CD14-positive monocyte (primary cell): ENCODE measurements at regions of chr19 and their contacts with region 1.

Region 1: DNA sequence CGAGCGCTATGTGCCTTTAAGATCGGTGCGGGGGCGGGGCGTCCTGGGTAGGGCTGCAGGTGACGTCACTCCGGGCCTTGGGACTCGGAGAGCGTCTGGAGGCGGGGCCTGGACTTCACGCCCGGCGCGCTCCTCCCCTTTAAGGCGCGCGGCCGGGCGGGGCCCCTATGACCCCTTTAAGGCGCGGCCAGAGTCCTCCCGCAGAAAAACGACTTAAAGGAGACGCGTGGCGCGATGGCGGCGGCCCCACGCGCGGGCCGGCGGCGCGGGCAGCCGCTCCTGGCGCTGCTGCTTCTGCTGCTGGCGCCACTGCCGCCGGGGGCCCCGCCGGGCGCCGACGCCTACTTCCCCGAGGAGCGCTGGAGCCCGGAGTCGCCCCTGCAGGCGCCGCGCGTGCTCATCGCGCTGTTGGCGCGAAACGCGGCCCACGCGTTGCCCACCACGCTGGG is at the start of gene COLGALT1:
- DNase-seq: peak; percentile 97 to 98 (median 98)
- H3K4me3 ChIP-seq: peak within 1 kb of the TSS; percentile 74 to 95 (median 93)
- H3K4me3 Mint-ChIP-seq: peak within 1 kb of the TSS; percentile 83 to 91
- H3K27ac ChIP-seq: peak within 1 kb of the TSS; percentile 83
- H3K27ac Mint-ChIP-seq: peak within 1 kb of the TSS; percentile 89 to 99 (median 94)
- H3K4me1 ChIP-seq: peaks cover 56 to 59% of the 10 kb centered on the region in 2 donors
- H3K4me1 Mint-ChIP-seq: peaks cover 43% of the 10 kb centered on the region
- H3K27me3 ChIP-seq: no peaks in the 10 kb centered on the region
- H3K27me3 Mint-ChIP-seq: peaks cover 0 to 5% (median 1%) of the 10 kb centered on the region in 3 donors
- CTCF ChIP-seq: no peak
- polyA plus RNA-seq, gene COLGALT1: 66.8 to 176 (median 68.8) TPM

Region 2: GRCh38 chr19:17511724-17512573 is 43.6 kb before region 1 on chr19:
- intact Hi-C with region 1: loop called (anchors 5 kb)
- DNase-seq: peak; percentile 59 to 79 (median 77)
- H3K4me3 ChIP-seq: peak overlapping the region; percentile 64 to 97 (median 66)
- H3K4me3 Mint-ChIP-seq: peak overlapping the region; percentile 95 to 99
- H3K27ac ChIP-seq: peak overlapping the region; percentile 75 to 91
- H3K27ac Mint-ChIP-seq: peak overlapping the region; percentile 81 to 96 (median 92)
- H3K4me1 ChIP-seq: peaks cover 29 to 52% of the 10 kb centered on the region in 2 donors
- H3K4me1 Mint-ChIP-seq: peaks cover 50% of the 10 kb centered on the region
- H3K27me3 ChIP-seq: no peaks in the 10 kb centered on the region
- H3K27me3 Mint-ChIP-seq: peaks cover 0 to 1% (median 0%) of the 10 kb centered on the region in 3 donors
- CTCF ChIP-seq: no peak

Region 3: DNA sequence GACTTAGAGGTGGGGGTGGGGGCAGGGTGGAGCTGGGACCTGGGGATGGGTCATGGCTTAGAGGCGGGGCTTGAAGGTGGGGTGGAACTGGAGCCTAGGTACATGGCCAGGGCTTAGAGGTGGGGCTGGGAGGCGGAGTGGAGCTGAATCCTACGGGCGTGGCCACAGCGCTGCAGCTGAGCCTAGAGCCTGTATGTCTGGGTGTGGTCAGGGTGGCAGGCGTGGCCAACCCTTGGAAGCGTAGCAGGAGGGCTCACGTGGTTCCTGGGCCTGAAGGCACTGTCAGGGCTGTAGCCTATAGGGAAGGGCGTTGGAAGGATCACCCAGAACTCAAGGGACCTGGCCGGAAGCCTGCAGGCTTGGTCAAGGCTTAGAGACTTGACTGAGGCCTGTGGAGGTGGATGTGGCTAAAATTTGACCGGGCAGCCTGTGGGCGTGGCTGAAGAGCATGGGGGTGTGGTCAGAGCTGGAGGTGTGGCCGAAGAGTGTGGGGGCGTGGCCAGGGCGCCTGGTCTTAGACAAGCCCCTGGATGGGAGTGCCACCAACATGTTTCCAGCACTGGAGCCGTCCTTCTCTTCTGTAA is 24.2 kb after region 1 on chr19:
- intact Hi-C with region 1: loop called in 1 of 2 experiments (anchors 2 kb)
- DNase-seq: peak; percentile 57 to 61 (median 61)
- H3K4me3 ChIP-seq: peak overlapping the region in 1 of 3 experiments; percentile 44
- H3K4me3 Mint-ChIP-seq: peak overlapping the region; percentile 63 to 66
- H3K27ac ChIP-seq: peak overlapping the region in 1 of 2 donors; percentile 20
- H3K27ac Mint-ChIP-seq: peak overlapping the region; percentile 68 to 88 (median 77)
- H3K4me1 ChIP-seq: peaks cover 6 to 19% of the 10 kb centered on the region in 2 donors
- H3K4me1 Mint-ChIP-seq: peaks cover 11% of the 10 kb centered on the region
- H3K27me3 ChIP-seq: no peaks in the 10 kb centered on the region
- H3K27me3 Mint-ChIP-seq: no peaks in the 10 kb centered on the region
- CTCF ChIP-seq: no peak